ENCODE measurements at regions of chr11 and their contacts with region 1.

Region 1: DNA sequence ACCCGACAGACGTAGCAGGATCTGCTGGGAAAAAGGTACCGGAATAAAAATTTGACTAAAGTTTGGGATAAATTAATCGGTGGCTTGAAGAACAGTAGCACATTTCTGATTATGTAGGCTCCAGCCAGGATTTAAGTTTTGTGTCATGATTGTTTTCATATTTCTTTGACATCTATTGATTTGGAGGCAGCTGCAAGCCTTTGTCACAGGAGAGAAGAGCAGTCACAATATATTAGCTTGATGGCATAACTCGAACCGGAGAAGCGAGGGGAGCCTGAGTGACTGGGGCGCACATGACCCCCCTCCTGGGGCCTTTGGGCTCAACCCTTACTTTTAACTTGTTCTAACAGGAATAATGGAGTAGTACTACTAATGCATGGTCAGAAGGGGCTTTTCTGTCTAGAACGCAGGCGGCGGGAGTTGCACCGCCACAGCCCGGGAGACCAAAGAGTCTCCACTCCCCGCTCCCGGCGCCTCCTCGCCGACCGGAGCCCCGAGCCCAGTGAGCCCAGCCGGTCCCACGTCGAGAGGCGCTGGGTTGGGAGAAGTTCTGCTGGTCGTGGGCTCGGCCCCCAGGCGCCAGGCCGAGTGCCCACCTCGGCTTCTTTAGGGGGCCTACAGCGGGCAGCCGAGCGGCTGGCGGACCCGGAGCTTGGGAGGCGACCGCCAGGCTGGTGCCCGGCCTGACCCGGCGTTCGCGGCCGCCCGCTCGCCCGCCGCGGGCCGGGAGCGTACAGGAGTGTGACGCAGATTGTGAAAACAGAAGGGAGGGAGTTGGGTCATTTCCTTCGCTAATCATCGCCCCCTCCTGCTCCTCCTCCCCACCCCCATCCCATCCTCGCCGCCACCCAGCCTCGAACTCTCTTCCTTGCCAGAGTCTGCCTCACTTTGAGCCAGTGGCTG is 15.7 kb upstream of the PAX6 start:
- DNase-seq: peak; percentile 54
- H3K4me3 Mint-ChIP-seq: no peak overlapping the region
- H3K27ac Mint-ChIP-seq: peak overlapping the region; percentile 62
- H3K4me1 Mint-ChIP-seq: peaks cover 6% of the 10 kb centered on the region
- H3K27me3 Mint-ChIP-seq: peaks cover 76% of the 10 kb centered on the region

Region 2: DNA sequence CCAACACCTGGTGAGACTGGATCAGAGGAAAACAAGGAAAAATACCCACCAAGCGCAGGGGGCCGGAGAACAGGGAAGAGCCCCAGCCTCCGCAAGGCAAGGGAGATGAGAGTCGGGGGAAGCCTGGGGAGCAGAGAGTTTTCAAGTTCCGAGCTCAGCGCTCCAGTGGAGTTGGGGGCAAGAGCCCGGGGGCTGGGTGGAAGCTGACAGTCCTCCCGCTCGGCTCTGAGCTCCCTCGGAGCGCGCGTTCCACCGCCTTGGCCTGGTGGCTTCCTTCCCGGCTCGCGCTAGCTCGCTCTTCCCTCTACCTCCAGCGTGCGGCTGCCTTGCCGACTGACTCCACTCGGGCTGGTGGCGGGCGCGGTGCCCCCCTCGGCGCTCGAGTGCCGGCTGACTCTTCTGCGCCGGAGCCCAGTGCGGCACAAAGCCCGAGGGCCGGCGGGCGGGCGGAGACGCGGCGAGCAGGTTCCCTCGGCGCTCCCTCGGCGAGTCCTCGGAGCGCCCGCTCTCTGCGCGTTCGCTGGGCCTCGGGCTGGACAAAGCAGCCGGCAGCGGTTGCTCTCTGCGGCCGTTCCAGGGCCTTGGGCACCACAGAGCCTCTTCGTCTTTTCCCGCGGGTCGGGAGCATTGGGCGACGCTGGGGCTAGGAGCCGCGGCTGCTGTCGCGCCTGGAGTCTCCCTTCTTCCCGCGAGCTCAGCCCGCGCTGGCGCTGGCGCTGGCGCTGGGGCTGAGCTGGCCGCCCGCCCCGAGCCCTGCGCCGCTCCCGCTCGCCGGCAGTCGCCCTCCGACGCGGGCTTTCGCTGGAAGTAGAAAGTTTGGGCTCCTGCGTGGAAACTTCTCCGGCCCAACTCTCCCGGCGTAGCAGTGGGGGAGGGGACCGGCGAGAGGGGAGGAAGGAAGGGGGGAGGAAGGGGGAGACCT is 16.7 kb before region 1 on chr11:
- intact Hi-C with region 1: loop called (anchors 2 kb)
- DNase-seq: peak; percentile 60
- H3K4me3 Mint-ChIP-seq: peak overlapping the region; percentile 46
- H3K27ac Mint-ChIP-seq: peak overlapping the region; percentile 36
- H3K4me1 Mint-ChIP-seq: peaks cover 16% of the 10 kb centered on the region
- H3K27me3 Mint-ChIP-seq: peaks cover 76% of the 10 kb centered on the region

Region 3: DNA sequence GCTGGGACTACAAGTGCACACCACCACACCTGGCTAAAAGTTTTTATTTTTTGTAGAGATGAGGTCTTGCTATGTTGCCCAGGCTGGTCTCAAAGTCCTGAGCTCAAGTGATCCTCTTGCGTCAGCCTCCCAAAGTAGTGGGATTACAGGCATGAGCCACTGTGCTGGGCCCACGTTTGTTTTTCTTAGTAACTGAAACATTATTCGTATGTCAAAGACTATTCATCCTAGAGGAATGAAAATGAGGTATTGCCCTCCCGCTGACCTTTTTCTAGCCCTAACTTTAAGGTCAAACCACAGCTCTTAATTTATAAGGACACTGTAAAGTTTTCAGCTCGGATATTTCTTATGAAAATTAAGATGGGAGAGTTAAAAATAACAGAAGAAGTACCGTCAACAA is 17.6 kb after region 1 on chr11:
- intact Hi-C with region 1: no loop called
- DNase-seq: no peak
- H3K4me3 Mint-ChIP-seq: no peak overlapping the region
- H3K27ac Mint-ChIP-seq: no peak overlapping the region
- H3K4me1 Mint-ChIP-seq: no peaks in the 10 kb centered on the region
- H3K27me3 Mint-ChIP-seq: peaks cover 23% of the 10 kb centered on the region

Region 4: DNA sequence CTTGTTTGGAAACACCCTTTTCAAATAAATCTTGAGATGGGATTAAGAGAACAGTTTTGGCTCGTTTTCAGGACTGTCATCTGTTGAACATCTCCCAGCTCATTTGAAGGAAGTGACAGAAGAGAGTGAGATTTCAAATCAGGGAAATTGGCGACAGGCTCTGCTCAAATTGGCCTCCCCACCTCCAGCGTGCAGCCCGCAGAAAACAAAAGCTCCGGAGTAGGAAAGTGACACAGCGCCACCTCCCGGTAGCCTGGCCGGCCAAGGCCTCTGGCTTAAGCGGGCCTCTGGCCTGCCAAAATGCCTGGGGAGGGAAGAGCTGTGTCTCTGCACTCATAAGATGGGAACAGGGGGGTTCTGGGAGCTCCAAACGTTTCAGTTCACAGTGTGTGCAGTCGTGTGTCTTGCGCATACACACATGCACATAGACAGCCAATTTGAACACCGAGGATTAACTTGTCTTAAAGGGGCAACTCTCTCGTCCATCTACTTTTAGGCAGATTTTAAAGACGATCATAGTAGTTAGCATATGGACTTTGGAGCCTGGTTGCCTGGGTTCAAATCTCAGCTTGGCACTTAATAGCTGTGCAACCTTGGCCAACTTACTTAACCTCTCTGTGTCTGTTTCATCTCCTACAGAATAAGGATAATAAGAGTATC is 131.4 kb after region 1 on chr11:
- intact Hi-C with region 1: loop called (anchors 10 kb)
- DNase-seq: peak; percentile 92
- H3K4me3 Mint-ChIP-seq: no peak overlapping the region
- H3K27ac Mint-ChIP-seq: no peak overlapping the region
- H3K4me1 Mint-ChIP-seq: peaks cover 5% of the 10 kb centered on the region
- H3K27me3 Mint-ChIP-seq: peaks cover 13% of the 10 kb centered on the region

Region 5: DNA sequence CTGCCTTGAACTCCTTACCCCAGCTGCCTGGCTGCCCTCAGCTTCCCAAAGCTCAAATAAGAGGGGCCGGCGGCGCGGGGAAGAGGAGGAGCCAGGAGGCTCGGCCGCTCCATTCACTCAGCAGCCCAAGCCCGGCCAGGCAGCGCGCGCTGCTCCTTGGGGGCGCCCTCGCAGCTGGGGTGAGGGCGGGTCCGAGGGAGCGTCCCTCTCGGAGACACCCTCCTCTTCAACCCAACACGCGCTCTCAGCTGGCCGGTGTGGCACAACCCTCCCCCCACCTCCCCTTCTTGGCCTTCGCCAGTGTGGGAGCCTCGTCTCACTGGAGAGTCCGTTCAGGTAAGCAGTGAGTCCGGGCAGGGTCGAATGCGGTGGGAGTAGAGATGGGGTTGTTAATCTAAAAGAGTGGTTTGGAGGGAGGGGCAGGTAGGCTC is 608.7 kb after region 1 on chr11 and contains the start of gene WT1:
- intact Hi-C with region 1: loop called (anchors 2 kb)
- DNase-seq: no peak
- H3K4me3 Mint-ChIP-seq: peak within 1 kb of the TSS; percentile 40
- H3K27ac Mint-ChIP-seq: peak within 1 kb of the TSS; percentile 67
- H3K4me1 Mint-ChIP-seq: peaks cover 8% of the 10 kb centered on the region
- H3K27me3 Mint-ChIP-seq: peaks cover 79% of the 10 kb centered on the region
- total RNA-seq, gene WT1: not detected in 2 replicates

Measured in activated CD4-positive, alpha-beta T cell treated with anti-CD3 and anti-CD28 coated beads, Interleukin-2, amount 10 ng/mL, durations not matched to agents 24 days and 14 days (primary cell).